Calu3 (cell line): ENCODE measurements at regions of chr9 and their contacts with region 1.

Region 1: GRCh38 chr9:113657703-113658544 is 194.4 kb downstream of the RGS3 start:
- DNase-seq: peak; percentile 82
- H3K4me3 Mint-ChIP-seq: no peak overlapping the region
- H3K27ac Mint-ChIP-seq: no peak overlapping the region
- H3K4me1 Mint-ChIP-seq: peaks cover 10% of the 10 kb centered on the region
- H3K27me3 Mint-ChIP-seq: peaks cover 35% of the 10 kb centered on the region
- CTCF ChIP-seq: peak; percentile 80

Region 2: GRCh38 chr9:113255438-113255837 is 402.5 kb before region 1 on chr9:
- CTCF ChIA-PET with region 1: interaction called, 10 read pairs
- intact Hi-C with region 1: no loop called
- DNase-seq: no peak
- H3K4me3 Mint-ChIP-seq: no peak overlapping the region
- H3K27ac Mint-ChIP-seq: no peak overlapping the region
- H3K4me1 Mint-ChIP-seq: no peaks in the 10 kb centered on the region
- H3K27me3 Mint-ChIP-seq: no peaks in the 10 kb centered on the region
- CTCF ChIP-seq: no peak

Region 3: DNA sequence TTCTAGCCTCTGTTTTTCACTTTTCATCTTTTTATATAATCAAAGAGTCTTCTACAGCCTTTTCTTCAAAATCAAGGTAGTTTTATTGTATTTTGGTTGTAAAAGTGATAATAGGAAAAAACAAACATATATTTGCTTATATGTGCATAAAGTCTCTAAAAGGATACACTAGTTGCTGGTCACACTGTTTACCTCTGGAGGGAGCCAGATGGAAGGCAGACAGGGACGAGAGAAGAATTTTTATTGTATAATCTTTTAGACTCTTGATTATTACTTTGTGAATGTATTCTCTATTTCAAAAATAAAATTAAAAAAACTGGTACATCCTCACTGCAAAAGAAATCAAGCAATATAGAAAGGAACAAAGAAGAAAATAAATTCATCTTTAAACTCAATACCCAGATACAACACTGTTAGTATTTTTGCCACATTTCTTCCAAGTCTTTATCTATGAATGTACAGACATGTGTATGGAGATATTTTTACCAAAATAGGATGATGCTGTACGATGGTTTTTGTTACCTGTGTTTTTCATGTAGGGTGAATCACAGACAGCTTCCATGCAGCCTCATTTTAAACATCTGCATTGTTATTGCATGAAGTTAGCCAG is 348.6 kb before region 1 on chr9:
- CTCF ChIA-PET with region 1: no interaction called
- intact Hi-C with region 1: loop called (anchors 1 kb)
- DNase-seq: peak; percentile 20
- H3K4me3 Mint-ChIP-seq: no peak overlapping the region
- H3K27ac Mint-ChIP-seq: no peak overlapping the region
- H3K4me1 Mint-ChIP-seq: no peaks in the 10 kb centered on the region
- H3K27me3 Mint-ChIP-seq: no peaks in the 10 kb centered on the region
- CTCF ChIP-seq: peak; percentile 15

Region 4: DNA sequence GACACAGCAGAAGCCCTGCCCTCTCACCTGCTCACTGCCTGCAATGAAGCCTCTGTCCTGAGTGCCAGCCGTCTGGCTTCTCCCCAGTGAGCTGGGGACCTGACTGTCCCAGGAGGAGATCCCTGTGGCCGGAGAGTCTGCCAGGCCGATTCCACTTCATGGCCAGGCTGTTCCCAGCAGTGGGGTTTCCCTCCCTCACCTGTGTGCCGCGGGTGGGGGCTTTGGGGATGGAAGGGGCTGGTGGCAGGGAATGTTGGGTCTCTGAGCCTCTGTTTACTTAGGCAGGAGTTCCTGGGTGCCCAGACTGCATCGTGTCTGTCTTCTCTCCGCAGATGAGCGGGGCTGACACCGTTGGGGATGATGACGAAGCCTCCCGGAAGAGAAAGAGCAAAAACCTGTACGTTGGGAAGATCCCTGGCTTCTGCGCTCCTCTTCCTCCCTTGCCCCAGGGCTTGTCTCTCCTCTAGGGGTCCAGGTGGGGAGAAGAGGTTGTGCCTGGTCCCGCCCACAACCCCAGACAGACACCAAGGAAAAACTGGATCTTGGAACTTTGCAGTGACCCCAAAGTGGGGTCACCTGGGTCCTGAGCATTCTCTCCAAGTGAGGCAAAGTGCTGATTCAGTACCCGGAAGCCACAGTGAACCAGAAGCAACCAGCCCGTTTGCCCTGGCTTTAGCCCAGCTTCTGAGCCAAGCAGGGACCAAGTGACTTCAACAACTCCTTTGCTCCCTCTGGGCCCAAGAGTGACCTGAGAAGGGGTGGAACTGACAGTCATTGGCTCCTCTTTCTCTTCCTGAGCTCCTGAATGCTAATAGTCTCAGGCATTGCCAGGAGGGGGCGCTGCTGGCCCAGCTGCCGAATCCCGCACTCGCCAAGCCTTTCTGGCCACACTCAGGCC is 66.7 kb before region 1 on chr9:
- CTCF ChIA-PET with region 1: interaction called, 83 read pairs
- intact Hi-C with region 1: loop called (anchors 1 kb)
- DNase-seq: peak; percentile 75
- H3K4me3 Mint-ChIP-seq: no peak overlapping the region
- H3K27ac Mint-ChIP-seq: no peak overlapping the region
- H3K4me1 Mint-ChIP-seq: no peaks in the 10 kb centered on the region
- H3K27me3 Mint-ChIP-seq: no peaks in the 10 kb centered on the region
- CTCF ChIP-seq: peak; percentile 81

Region 5: GRCh38 chr9:113989017-113989713 is 331.2 kb after region 1 on chr9:
- CTCF ChIA-PET with region 1: no interaction called
- intact Hi-C with region 1: no loop called
- DNase-seq: no peak
- H3K4me3 Mint-ChIP-seq: no peak overlapping the region
- H3K27ac Mint-ChIP-seq: no peak overlapping the region
- H3K4me1 Mint-ChIP-seq: no peaks in the 10 kb centered on the region
- H3K27me3 Mint-ChIP-seq: no peaks in the 10 kb centered on the region
- CTCF ChIP-seq: no peak